ENCODE measurements at regions of chr2 and their contacts with region 1.

Region 1: DNA sequence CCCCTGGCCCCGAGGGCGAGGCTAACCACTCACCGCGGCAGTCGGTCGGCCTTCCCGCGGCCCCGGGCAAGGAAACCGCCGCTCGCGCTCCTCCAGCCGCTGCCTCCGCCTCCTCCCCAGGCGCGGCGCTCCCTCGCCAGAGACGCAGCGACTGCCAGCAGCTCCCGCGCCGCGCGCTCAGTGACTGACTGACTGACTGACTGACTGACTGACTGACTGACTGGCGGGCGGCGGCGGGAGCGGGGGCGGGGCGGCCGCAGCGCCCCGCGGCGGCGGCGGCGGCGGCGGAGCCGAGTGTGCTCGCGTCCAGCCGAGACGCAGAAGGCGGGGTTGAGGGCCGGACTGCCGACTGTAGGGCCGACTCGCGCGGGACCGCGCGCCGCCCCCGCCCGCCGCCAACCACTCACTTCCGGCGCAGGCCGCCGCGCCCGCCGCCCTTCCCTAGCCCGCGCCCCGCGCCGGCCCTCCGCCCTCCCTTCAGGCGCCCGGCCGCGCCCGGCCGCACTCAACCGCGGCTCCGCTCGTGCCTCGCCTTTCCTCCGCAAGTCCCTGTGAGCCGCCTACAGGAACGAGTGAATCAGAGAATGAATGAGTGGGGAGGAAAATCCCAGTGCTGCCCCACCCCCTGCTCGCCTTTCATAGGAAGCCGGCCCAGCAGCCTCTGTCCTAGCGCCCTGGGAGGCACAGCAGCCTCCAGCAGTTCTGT is at the start of gene RAPH1:
- DNase-seq: peak; percentile 88 to 90
- ATAC-seq: peak; percentile 87 to 98 (median 93)
- H3K4me3 ChIP-seq: peak within 1 kb of the TSS; percentile 79 to 99 (median 90)
- H3K27ac ChIP-seq: peak within 1 kb of the TSS; percentile 86 to 98 (median 96)
- H3K4me1 ChIP-seq: peaks cover 0 to 42% (median 28%) of the 10 kb centered on the region in 9 donors
- H3K27me3 ChIP-seq: peaks cover 0 to 21% (median 0%) of the 10 kb centered on the region in 7 donors
- CTCF ChIP-seq: peak in 1 of 9 donors; percentile 23
- total RNA-seq, gene RAPH1: 11.8 to 20.6 (median 16.4) TPM

Region 2: GRCh38 chr2:203286532-203286931 is 248.7 kb before region 1 on chr2:
- intact Hi-C with region 1: no loop called
- DNase-seq: no peak
- ATAC-seq: no peak
- H3K4me3 ChIP-seq: no peak overlapping the region
- H3K27ac ChIP-seq: no peak overlapping the region
- H3K4me1 ChIP-seq: no peaks in the 10 kb centered on the region
- H3K27me3 ChIP-seq: no peaks in the 10 kb centered on the region
- CTCF ChIP-seq: no peak

Region 3: GRCh38 chr2:203484266-203485112 is 50.7 kb before region 1 on chr2:
- intact Hi-C with region 1: loop called in 1 of 10 experiments (anchors 5 kb)
- DNase-seq: peak in 1 of 2 donors; percentile 19
- ATAC-seq: peak; percentile 71 to 91 (median 82)
- H3K4me3 ChIP-seq: no peak overlapping the region
- H3K27ac ChIP-seq: no peak overlapping the region
- H3K4me1 ChIP-seq: peaks cover 0 to 6% (median 0%) of the 10 kb centered on the region in 9 donors
- H3K27me3 ChIP-seq: no peaks in the 10 kb centered on the region
- CTCF ChIP-seq: peak; percentile 48 to 79 (median 70)

Region 4: DNA sequence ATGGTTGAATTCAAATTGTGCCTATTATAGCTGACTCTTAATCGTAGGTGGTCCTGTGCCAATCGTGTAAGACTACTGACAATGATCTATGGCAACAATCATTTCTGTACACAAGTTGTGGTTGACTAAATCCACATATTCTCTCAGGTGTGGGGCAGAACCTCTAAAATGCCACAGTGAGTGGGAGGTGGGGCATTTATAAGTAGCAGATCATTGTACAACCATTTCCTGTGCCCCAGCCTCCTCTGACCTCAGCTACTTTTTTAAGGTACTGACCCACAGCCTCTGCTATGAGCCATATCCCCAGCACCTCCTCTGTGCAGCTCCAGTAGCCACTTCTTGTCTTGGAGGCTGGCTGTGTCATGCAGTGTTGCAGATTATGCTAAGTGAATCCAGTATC is 48.5 kb after region 1 on chr2:
- intact Hi-C with region 1: loop called in 1 of 10 experiments (anchors 5 kb)
- DNase-seq: peak in 1 of 2 donors; percentile 52
- ATAC-seq: peak; percentile 34 to 93 (median 77)
- H3K4me3 ChIP-seq: no peak overlapping the region
- H3K27ac ChIP-seq: peak overlapping the region in 5 of 10 donors; percentile 20 to 57 (median 44)
- H3K4me1 ChIP-seq: peaks cover 2 to 46% (median 22%) of the 10 kb centered on the region in 9 donors
- H3K27me3 ChIP-seq: no peaks in the 10 kb centered on the region
- CTCF ChIP-seq: no peak

Region 5: GRCh38 chr2:203650860-203651613 is 115.8 kb after region 1 on chr2:
- intact Hi-C with region 1: loop called in 1 of 10 experiments (anchors 10 kb)
- DNase-seq: peak in 1 of 2 donors; percentile 42
- ATAC-seq: peak; percentile 70 to 85 (median 82)
- H3K4me3 ChIP-seq: no peak overlapping the region
- H3K27ac ChIP-seq: peak overlapping the region in 9 of 10 donors; percentile 6 to 82 (median 58)
- H3K4me1 ChIP-seq: peaks cover 5 to 41% (median 31%) of the 10 kb centered on the region in 9 donors
- H3K27me3 ChIP-seq: no peaks in the 10 kb centered on the region
- CTCF ChIP-seq: peak in 8 of 9 donors; percentile 12 to 61 (median 46)

Region 6: DNA sequence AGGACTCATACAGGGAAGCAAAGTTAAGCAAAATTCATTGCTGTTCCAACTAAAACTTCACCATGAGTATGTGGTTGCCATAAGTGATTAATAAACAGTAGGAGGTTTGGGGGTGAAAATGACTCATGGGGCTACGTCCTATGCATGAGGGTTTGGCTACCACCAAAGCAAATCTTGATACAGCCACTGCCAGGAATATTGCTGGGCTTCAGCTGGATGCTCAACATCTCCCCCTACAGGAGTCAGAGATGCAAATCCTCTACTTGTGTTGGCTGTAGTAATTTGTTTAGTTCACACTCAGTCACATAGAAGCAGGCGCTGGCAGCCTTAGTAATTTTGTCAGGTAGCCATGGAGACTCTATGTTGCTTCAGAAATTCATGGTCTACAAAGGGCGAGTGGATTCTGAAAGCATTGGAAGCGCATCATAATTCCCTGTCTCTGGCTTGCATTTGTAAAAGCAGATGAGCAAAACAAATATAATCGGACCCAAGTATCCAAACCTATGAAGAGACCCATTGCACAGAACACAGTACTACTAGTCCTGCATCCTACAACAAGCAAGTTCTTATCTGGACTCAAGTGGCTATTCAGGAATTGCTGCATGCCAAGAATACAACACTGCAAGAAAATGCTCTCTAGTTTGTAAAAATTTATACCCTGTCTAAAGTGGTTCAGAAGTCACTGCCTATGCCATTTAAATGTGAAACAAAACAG is 247.2 kb after region 1 on chr2:
- intact Hi-C with region 1: loop called in 1 of 10 experiments (anchors 10 kb)
- DNase-seq: peak in 1 of 2 donors; percentile 65
- ATAC-seq: peak in 7 of 8 donors; percentile 37 to 85 (median 64)
- H3K4me3 ChIP-seq: no peak overlapping the region
- H3K27ac ChIP-seq: peak overlapping the region in 5 of 10 donors; percentile 3 to 48 (median 13)
- H3K4me1 ChIP-seq: peaks cover 5 to 45% (median 32%) of the 10 kb centered on the region in 9 donors
- H3K27me3 ChIP-seq: no peaks in the 10 kb centered on the region
- CTCF ChIP-seq: peak; percentile 38 to 83 (median 68)